Activated CD4-positive, alpha-beta memory T cell treated with anti-CD3 and anti-CD28 coated beads for 36 hours (primary cell): ENCODE measurements at regions of chr2 and their contacts with region 1.

Region 1: GRCh38 chr2:203238704-203239526 is at the start of gene CYP20A1:
- DNase-seq: peak; percentile 98
- H3K4me3 Mint-ChIP-seq: peak within 1 kb of the TSS; percentile 86
- H3K27ac Mint-ChIP-seq: peak within 1 kb of the TSS; percentile 94
- H3K4me1 Mint-ChIP-seq: peaks cover 32% of the 10 kb centered on the region
- H3K27me3 Mint-ChIP-seq: no peaks in the 10 kb centered on the region
- total RNA-seq, gene CYP20A1: 22.1 to 24.4 TPM

Region 2: GRCh38 chr2:202870431-202871299 is 368.2 kb before region 1 on chr2:
- CTCF ChIA-PET with region 1: no interaction called
- POLR2A ChIA-PET with region 1: no interaction called
- intact Hi-C with region 1: loop called (anchors 5 kb)
- DNase-seq: peak; percentile 81
- H3K4me3 Mint-ChIP-seq: peak overlapping the region; percentile 88
- H3K27ac Mint-ChIP-seq: peak overlapping the region; percentile 61
- H3K4me1 Mint-ChIP-seq: peaks cover 7% of the 10 kb centered on the region
- H3K27me3 Mint-ChIP-seq: no peaks in the 10 kb centered on the region

Region 3: GRCh38 chr2:203014456-203015199 is 224.3 kb before region 1 on chr2 and contains the start of gene NBEAL1:
- CTCF ChIA-PET with region 1: no interaction called
- POLR2A ChIA-PET with region 1: no interaction called
- intact Hi-C with region 1: loop called (anchors 1 kb)
- DNase-seq: peak; percentile 98
- H3K4me3 Mint-ChIP-seq: peak within 1 kb of the TSS; percentile 94
- H3K27ac Mint-ChIP-seq: peak within 1 kb of the TSS; percentile 90
- H3K4me1 Mint-ChIP-seq: peaks cover 31% of the 10 kb centered on the region
- H3K27me3 Mint-ChIP-seq: no peaks in the 10 kb centered on the region
- total RNA-seq, gene NBEAL1: 10.6 to 11.6 TPM

Region 4: GRCh38 chr2:203327901-203328759 is 89.2 kb after region 1 on chr2 and contains the start of gene ABI2:
- CTCF ChIA-PET with region 1: no interaction called
- POLR2A ChIA-PET with region 1: interaction called, 4 read pairs
- intact Hi-C with region 1: loop called (anchors 1 kb)
- DNase-seq: peak; percentile 76
- H3K4me3 Mint-ChIP-seq: peak within 1 kb of the TSS; percentile 86
- H3K27ac Mint-ChIP-seq: peak within 1 kb of the TSS; percentile 79
- H3K4me1 Mint-ChIP-seq: peaks cover 33% of the 10 kb centered on the region
- H3K27me3 Mint-ChIP-seq: no peaks in the 10 kb centered on the region
- total RNA-seq, gene ABI2: 43.7 to 51.2 TPM

Region 5: GRCh38 chr2:203718087-203718486 is 479.2 kb after region 1 on chr2:
- CTCF ChIA-PET with region 1: no interaction called
- POLR2A ChIA-PET with region 1: no interaction called
- intact Hi-C with region 1: loop called (anchors 10 kb)
- DNase-seq: peak; percentile 85
- H3K4me3 Mint-ChIP-seq: peak overlapping the region; percentile 69
- H3K27ac Mint-ChIP-seq: peak overlapping the region; percentile 94
- H3K4me1 Mint-ChIP-seq: peaks cover 96% of the 10 kb centered on the region
- H3K27me3 Mint-ChIP-seq: no peaks in the 10 kb centered on the region